ENCODE measurements at regions of chr1 and their contacts with region 1.

Region 1: GRCh38 chr1:161165742-161166668 is at the start of gene PPOX:
- DNase-seq: peak; percentile 90

Region 2: GRCh38 chr1:161132410-161133219 is 33.4 kb before region 1 on chr1 and contains the start of gene DEDD:
- CTCF ChIA-PET with region 1: no interaction called
- POLR2A ChIA-PET with region 1: interaction called, 18 read pairs
- DNase-seq: peak; percentile 93

Region 3: GRCh38 chr1:161153679-161154426 is 12.2 kb before region 1 on chr1 and contains the start of gene UFC1:
- CTCF ChIA-PET with region 1: interaction called, 6 read pairs
- POLR2A ChIA-PET with region 1: interaction called, 19 read pairs
- DNase-seq: peak; percentile 85

Region 4: DNA sequence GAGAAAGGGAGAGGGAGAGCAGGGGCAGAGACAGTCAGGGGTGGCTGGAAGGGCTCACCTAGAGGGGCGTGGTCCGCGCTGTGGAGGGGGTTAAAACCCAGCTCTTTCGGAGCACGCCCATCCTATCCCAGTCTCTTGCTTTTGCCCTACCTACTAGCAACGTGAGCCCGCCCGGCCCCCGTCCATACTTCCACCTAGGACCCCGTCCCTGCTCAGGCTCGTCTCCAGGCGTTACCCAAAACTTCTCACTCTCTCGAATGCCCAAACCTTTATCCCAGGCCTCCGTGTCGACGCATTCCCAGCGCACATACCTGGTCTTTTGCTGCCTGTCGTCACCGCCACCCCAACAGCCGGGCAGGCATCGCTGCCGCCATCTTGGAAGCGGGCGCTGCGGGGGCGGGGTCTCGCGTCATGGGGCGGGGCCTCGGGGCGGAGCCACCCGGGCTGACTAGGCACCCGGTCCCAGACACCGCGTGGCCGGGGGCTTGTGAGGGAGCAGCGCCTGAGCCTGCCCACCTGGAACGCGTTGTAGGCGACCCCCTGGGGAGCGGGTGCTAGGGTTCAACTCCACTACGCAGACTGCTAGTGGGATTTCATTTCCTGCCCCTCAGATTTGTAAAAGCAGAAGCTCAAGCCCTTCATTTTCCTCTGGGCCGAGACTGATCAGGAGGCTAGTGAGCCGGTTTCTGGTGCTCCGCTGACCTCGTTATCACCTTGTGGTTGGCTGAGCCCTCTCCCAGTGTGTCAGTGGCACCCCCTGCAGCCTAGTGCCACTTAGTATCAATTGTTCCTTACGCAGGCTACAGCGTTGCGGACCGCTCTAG is 11.3 kb after region 1 on chr1 and contains the start of gene B4GALT3:
- CTCF ChIA-PET with region 1: interaction called, 7 read pairs
- POLR2A ChIA-PET with region 1: interaction called, 14 read pairs
- DNase-seq: peak; percentile 99

Measured in HEK293T (cell line).